ENCODE measurements at regions of chr5 and their contacts with region 1.

Region 1: DNA sequence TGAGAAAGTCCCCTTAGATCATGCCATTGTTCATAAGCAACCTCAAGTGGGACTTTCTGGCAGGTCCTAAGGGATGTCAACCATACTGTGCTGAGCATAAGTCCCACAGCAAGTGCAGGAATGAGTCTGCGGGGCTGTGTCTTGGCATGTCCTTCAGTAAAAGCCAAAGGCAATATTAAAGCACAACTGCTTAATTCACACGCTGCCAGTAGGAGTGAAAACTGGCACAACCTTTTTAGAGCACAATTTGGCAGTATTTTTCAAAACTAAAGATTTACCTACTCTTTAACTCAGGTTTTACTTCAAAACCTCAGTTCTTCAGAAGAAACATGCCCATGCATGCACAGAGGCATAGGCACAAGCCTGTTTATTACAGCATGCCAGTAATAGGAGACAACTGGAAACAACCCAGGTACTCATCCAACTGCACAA is 24.4 kb upstream of the SMAD5 start:
- DNase-seq: peak; percentile 48
- H3K4me3 Mint-ChIP-seq: no peak overlapping the region
- H3K27ac Mint-ChIP-seq: peak overlapping the region; percentile 80
- H3K4me1 Mint-ChIP-seq: peaks cover 16% of the 10 kb centered on the region
- H3K27me3 Mint-ChIP-seq: no peaks in the 10 kb centered on the region
- CTCF ChIP-seq: no peak

Region 2: GRCh38 chr5:136123236-136123768 is 15.1 kb after region 1 on chr5:
- CTCF ChIA-PET with region 1: interaction called, 6 read pairs
- POLR2A ChIA-PET with region 1: interaction called, 42 read pairs
- intact Hi-C with region 1: no loop called
- DNase-seq: peak; percentile 76
- H3K4me3 Mint-ChIP-seq: no peak overlapping the region
- H3K27ac Mint-ChIP-seq: no peak overlapping the region
- H3K4me1 Mint-ChIP-seq: peaks cover 15% of the 10 kb centered on the region
- H3K27me3 Mint-ChIP-seq: no peaks in the 10 kb centered on the region
- CTCF ChIP-seq: no peak

Measured in MCF 10A (cell line).